ENCODE measurements at regions of chr12 and their contacts with region 1.

Region 1: DNA sequence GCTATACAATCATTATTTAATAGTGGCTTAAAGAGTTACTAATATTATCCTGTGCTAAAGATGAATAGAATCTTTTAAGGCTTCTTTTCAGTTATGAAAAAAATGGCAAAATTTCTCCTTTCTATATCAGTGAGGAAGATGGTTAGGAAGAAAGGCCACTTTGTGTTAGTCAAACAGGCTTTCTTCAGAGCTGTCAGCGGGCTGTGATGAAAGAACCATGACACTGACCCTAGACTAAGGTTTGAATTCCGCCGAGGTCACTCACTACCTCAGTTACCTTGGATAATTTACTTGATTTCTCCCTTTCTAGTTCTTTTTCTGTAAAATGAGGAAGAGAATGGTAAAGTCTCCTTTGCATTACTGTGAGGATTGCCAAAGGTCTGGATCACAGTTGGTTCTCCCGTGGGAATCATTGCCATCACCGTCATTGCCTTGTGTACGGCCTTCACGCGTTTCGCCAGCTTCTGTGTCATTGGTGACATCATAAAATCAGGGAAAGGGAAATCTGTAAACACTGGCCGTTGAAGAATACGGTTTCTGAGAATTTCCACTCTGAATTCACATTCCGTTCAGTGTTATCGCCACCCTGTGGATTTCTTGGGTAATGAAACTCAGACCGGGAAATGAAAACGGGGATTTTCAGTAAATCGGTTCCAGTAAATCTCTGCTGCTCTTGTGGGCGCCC is 26.7 kb upstream of the YBX3 start:
- DNase-seq: peak; percentile 37 to 92
- H3K4me3 ChIP-seq: peak overlapping the region; percentile 28 to 51
- H3K27ac ChIP-seq: peak overlapping the region; percentile 42
- H3K4me1 ChIP-seq: no peaks in the 10 kb centered on the region
- H3K27me3 ChIP-seq: no peaks in the 10 kb centered on the region
- CTCF ChIP-seq: peak; percentile 86 to 95 (median 90)

Region 2: GRCh38 chr12:10584415-10584814 is 165.4 kb before region 1 on chr12:
- intact Hi-C with region 1: no loop called
- DNase-seq: no peak
- H3K4me3 ChIP-seq: no peak overlapping the region
- H3K27ac ChIP-seq: no peak overlapping the region
- H3K4me1 ChIP-seq: no peaks in the 10 kb centered on the region
- H3K27me3 ChIP-seq: no peaks in the 10 kb centered on the region
- CTCF ChIP-seq: no peak

Region 3: GRCh38 chr12:10613349-10614055 is 136.3 kb before region 1 on chr12 and contains the start of gene MAGOHB:
- intact Hi-C with region 1: loop called (anchors 1 kb)
- DNase-seq: peak; percentile 82 to 98
- H3K4me3 ChIP-seq: peak within 1 kb of the TSS; percentile 86 to 99
- H3K27ac ChIP-seq: peak within 1 kb of the TSS; percentile 87 to 94
- H3K4me1 ChIP-seq: peaks cover 0 to 6% of the 10 kb centered on the region in 2 donors
- H3K27me3 ChIP-seq: no peaks in the 10 kb centered on the region
- CTCF ChIP-seq: no peak
- total RNA-seq, gene MAGOHB: 5.4 TPM

Region 4: GRCh38 chr12:10716704-10717315 is 33.0 kb before region 1 on chr12:
- intact Hi-C with region 1: loop called (anchors 2 kb)
- DNase-seq: peak; percentile 73 to 95
- H3K4me3 ChIP-seq: peak overlapping the region in 1 of 2 donors; percentile 23
- H3K27ac ChIP-seq: peak overlapping the region; percentile 69 to 98
- H3K4me1 ChIP-seq: peaks cover 0 to 35% of the 10 kb centered on the region in 2 donors
- H3K27me3 ChIP-seq: no peaks in the 10 kb centered on the region
- CTCF ChIP-seq: no peak

Region 5: DNA sequence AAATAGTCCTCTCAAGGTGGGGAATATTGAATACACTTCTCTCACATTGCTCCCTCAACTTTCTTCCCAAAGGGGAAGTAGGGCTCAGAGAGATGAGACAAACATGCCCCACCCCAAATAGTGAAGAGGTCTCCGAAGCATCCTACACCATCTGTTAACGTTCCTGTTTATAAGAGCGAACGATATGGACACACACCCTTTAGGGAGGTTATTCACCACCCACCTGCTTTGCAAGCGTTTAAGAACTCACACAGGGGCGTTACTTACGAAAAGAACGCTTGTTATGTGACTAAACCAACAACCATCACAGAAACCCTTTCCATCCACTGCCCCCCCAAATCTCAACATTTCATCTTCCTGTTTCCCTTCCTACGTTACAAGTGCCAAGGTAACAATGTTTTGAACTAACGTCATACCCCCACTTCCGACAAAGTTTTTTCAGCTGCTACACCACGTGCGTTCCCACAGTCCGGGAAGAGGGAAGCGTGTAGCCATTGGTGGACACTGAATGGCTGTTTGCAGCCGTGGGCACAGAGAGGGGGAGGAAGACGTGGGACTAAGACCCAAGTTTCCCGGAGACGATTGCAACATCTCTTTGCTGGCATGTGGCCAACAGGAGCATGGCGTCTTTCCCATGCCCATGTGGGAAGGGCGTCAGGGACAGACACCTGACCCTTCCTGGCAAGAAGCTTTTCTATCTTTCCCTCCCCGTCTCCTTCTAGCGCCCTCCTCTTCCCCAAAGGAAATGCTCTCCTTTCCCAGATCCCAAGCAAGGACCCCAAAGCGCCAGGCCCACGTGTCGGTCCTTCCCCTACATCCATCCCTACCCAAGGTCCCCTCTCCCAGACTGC is 28.0 kb before region 1 on chr12:
- intact Hi-C with region 1: loop called (anchors 1 kb)
- DNase-seq: peak; percentile 92 to 98
- H3K4me3 ChIP-seq: peak overlapping the region; percentile 80 to 95
- H3K27ac ChIP-seq: peak overlapping the region; percentile 98
- H3K4me1 ChIP-seq: peaks cover 0 to 40% of the 10 kb centered on the region in 2 donors
- H3K27me3 ChIP-seq: no peaks in the 10 kb centered on the region
- CTCF ChIP-seq: no peak

Region 6: DNA sequence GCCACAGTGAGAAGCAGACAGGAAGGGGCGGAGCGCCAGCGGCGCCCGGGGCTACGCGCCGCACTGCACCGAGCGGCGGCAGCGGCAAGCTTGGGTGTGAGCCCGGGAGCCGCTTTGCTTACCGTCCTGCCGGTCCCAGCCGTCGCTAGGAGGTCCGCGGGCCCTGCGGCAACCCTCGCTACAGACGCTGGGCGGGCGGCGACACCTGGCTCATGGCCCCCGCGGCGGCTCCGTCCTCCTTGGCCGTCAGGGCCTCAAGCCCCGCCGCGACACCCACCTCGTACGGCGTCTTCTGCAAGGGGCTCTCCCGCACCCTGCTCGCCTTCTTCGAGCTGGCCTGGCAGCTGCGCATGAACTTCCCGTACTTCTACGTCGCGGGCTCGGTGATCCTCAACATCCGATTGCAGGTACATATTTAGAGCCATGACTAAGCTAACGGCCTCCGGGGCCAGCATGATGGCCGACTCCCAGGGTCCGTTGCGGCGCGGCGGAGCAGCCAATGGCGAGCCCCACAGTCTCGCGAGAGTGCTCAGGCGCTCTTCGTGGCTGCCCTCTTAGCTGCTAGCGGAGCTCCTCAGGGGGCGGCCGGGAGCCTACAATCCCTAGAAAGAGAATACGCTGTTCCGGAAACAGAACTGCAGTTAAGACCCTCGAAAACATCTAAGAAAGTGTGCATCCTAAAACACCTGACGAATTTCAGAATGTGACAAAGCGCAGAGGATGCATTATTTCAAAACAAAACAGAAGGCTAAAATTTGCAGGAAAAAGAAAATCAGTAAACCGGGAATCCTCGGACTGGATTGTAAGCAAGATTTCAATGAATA is 421.5 kb after region 1 on chr12 and contains the start of gene SMIM10L1:
- intact Hi-C with region 1: loop called (anchors 10 kb)
- DNase-seq: peak; percentile 66 to 97
- H3K4me3 ChIP-seq: peak within 1 kb of the TSS; percentile 58 to 90
- H3K27ac ChIP-seq: peak within 1 kb of the TSS; percentile 94 to 99
- H3K4me1 ChIP-seq: peaks cover 3 to 18% of the 10 kb centered on the region in 2 donors
- H3K27me3 ChIP-seq: no peaks in the 10 kb centered on the region
- CTCF ChIP-seq: no peak
- total RNA-seq, gene SMIM10L1: 8.0 TPM

Measured in ascending aorta (tissue), 2 donors.